Right cardiac atrium (tissue), 5 donors: ENCODE measurements at regions of chr6 and their contacts with region 1.

Region 1: GRCh38 chr6:29834564-29835436 is 7.2 kb downstream of the HLA-G start:
- DNase-seq: peak; percentile 35 to 78 (median 76)
- ATAC-seq: peak; percentile 36 to 63
- H3K4me3 ChIP-seq: no peak overlapping the region
- H3K27ac ChIP-seq: no peak overlapping the region
- H3K4me1 ChIP-seq: no peaks in the 10 kb centered on the region
- H3K27me3 ChIP-seq: no peaks in the 10 kb centered on the region

Region 2: DNA sequence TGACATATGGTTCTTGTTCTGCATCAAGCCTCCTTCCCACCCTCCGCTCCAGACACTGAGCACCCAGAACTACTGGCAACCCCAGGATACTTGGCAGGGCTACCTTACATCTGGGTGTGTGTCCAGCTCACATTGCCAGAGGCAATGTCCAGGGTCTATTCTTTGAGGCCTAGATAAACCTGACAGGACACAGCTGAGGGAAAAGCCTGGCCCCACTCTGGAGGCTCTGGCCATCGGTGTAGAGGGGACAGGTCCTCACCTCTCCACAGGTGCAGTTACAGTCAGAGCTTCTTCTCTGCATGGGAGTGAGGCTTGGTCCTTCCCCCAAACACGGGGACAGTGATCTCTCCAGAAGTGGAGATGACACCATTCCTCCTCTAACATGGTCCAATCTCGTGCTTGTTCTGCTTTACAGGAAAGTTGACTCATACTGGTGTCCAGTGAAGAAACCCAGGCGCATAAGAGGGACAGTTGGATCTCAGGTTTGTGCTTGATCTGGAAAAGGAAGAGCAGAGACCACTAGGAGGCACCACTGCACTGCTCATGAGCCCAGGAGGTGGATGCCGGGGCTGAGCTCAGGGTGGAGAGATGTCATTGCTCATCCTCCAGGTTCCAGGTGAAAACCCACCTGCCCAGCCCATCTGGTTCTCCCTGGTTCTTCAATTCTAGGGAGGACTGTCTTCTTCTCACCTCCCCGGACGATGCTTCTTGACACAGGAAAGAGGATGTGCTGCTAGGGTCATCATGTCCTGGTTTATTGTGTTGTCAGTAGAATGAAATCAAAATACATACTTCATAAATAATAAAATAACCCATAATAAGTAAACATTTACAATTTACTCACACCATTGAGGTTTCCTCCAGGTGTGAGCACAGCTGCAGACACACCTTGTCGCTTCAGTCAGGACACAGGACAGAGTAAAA is 96.8 kb before region 1 on chr6:
- intact Hi-C with region 1: loop called in 1 of 4 experiments (anchors 10 kb)
- DNase-seq: peak; percentile 60 to 79 (median 65)
- ATAC-seq: peak; percentile 82 to 90
- H3K4me3 ChIP-seq: no peak overlapping the region
- H3K27ac ChIP-seq: no peak overlapping the region
- H3K4me1 ChIP-seq: no peaks in the 10 kb centered on the region
- H3K27me3 ChIP-seq: no peaks in the 10 kb centered on the region